ENCODE measurements at regions of chr5 and their contacts with region 1.

Region 1: GRCh38 chr5:59174248-59174844 is 591.5 kb downstream of the RAB3C start:
- DNase-seq: peak; percentile 70
- H3K4me3 ChIP-seq: no peak overlapping the region
- H3K27ac ChIP-seq: no peak overlapping the region
- H3K27me3 ChIP-seq: no peaks in the 10 kb centered on the region
- CTCF ChIP-seq: peak; percentile 98

Region 2: GRCh38 chr5:58972301-58972700 is 202.0 kb before region 1 on chr5:
- CTCF ChIA-PET with region 1: interaction called, 10 read pairs
- POLR2A ChIA-PET with region 1: no interaction called
- DNase-seq: no peak
- H3K4me3 ChIP-seq: no peak overlapping the region
- H3K27ac ChIP-seq: no peak overlapping the region
- H3K27me3 ChIP-seq: no peaks in the 10 kb centered on the region
- CTCF ChIP-seq: no peak

Region 3: GRCh38 chr5:59007460-59008063 is 166.8 kb before region 1 on chr5:
- CTCF ChIA-PET with region 1: interaction called, 24 read pairs
- POLR2A ChIA-PET with region 1: no interaction called
- DNase-seq: no peak
- H3K4me3 ChIP-seq: no peak overlapping the region
- H3K27ac ChIP-seq: no peak overlapping the region
- H3K27me3 ChIP-seq: no peaks in the 10 kb centered on the region
- CTCF ChIP-seq: peak; percentile 53

Region 4: GRCh38 chr5:59039296-59040023 is 134.9 kb before region 1 on chr5:
- CTCF ChIA-PET with region 1: interaction called, 163 read pairs
- POLR2A ChIA-PET with region 1: no interaction called
- DNase-seq: no peak
- H3K4me3 ChIP-seq: peak overlapping the region; percentile 92
- H3K27ac ChIP-seq: peak overlapping the region; percentile 74
- H3K27me3 ChIP-seq: no peaks in the 10 kb centered on the region
- CTCF ChIP-seq: no peak

Region 5: GRCh38 chr5:59126708-59127573 is 47.4 kb before region 1 on chr5:
- CTCF ChIA-PET with region 1: interaction called, 30 read pairs
- POLR2A ChIA-PET with region 1: no interaction called
- DNase-seq: no peak
- H3K4me3 ChIP-seq: peak overlapping the region; percentile 42
- H3K27ac ChIP-seq: peak overlapping the region; percentile 97
- H3K27me3 ChIP-seq: no peaks in the 10 kb centered on the region
- CTCF ChIP-seq: no peak

Region 6: GRCh38 chr5:59164041-59164830 is 10.1 kb before region 1 on chr5:
- CTCF ChIA-PET with region 1: interaction called, 27 read pairs
- POLR2A ChIA-PET with region 1: no interaction called
- DNase-seq: peak; percentile 20
- H3K4me3 ChIP-seq: no peak overlapping the region
- H3K27ac ChIP-seq: no peak overlapping the region
- H3K27me3 ChIP-seq: no peaks in the 10 kb centered on the region
- CTCF ChIP-seq: no peak

Region 7: DNA sequence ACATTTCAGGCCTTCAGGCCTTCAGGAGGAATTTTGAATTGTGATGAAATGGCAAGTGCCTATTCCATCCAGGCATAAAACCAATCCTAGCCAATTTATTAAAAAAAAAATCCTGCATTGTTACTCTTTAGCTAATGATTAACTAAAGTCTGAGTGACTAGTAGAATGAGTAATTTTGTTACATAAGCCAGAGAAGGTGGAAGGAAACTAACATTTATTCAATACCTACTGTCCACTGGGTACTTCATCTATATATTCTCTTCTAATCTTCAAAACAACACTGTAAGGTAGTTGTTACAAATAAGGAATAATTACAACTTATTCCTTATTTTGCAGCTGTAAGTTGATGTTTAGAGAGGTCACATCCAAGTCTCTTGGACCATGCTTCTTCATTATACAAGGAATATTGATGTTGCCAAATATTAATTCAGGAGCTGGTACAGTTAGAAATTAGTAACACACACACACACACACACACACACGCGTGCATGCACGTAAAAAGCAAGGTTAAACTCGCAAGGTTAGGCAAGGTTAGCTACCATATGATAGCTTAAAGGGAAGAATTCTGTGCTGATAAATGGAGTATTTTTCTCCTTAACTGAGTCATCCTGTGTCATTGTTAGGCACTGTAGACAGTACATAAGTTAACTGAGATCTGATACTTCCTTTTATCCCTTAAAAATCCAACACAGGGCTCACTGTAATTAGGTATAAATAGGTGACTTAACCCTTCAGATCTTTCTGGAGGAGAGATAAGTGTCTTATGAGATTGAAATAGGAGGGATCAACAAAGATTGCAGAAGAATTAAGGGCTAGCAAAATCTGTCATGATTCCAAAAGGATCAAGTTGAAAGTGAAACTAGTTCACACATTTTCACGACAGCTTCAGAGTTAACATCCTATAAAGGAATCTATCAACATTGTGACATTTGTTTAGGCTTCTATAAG is 122.2 kb after region 1 on chr5:
- CTCF ChIA-PET with region 1: no interaction called
- POLR2A ChIA-PET with region 1: no interaction called
- DNase-seq: no peak
- H3K4me3 ChIP-seq: peak overlapping the region; percentile 5; the same call in 1 of the 2 replicates
- H3K27ac ChIP-seq: no peak overlapping the region
- H3K27me3 ChIP-seq: no peaks in the 10 kb centered on the region
- CTCF ChIP-seq: no peak

Measured in AG04450 (cell line).